ENCODE measurements at regions of chr1 and their contacts with region 1.

Region 1: GRCh38 chr1:214328770-214329469 is 48.0 kb downstream of the SMYD2 start:
- DNase-seq: peak; percentile 89
- H3K4me3 ChIP-seq: no peak overlapping the region
- H3K27ac ChIP-seq: no peak overlapping the region
- H3K4me1 ChIP-seq: peaks cover 0 to 7% (median 5%) of the 10 kb centered on the region in 4 donors
- H3K27me3 ChIP-seq: no peaks in the 10 kb centered on the region
- CTCF ChIP-seq: peak; percentile 79 to 92 (median 86)
- EP300 ChIP-seq: no peak
- POLR2A ChIP-seq: no peak

Region 2: GRCh38 chr1:213457097-213457680 is 871.7 kb before region 1 on chr1:
- intact Hi-C with region 1: no loop called
- DNase-seq: no peak
- H3K4me3 ChIP-seq: no peak overlapping the region
- H3K27ac ChIP-seq: peak overlapping the region in 2 of 4 donors; percentile 44 to 50
- H3K4me1 ChIP-seq: peaks cover 0 to 17% (median 13%) of the 10 kb centered on the region in 4 donors
- H3K27me3 ChIP-seq: no peaks in the 10 kb centered on the region
- CTCF ChIP-seq: no peak
- EP300 ChIP-seq: no peak
- POLR2A ChIP-seq: no peak

Region 3: GRCh38 chr1:214215583-214215982 is 113.3 kb before region 1 on chr1:
- intact Hi-C with region 1: loop called (anchors 2 kb)
- DNase-seq: no peak
- H3K4me3 ChIP-seq: no peak overlapping the region
- H3K27ac ChIP-seq: no peak overlapping the region
- H3K4me1 ChIP-seq: peaks cover 0 to 6% (median 5%) of the 10 kb centered on the region in 4 donors
- H3K27me3 ChIP-seq: no peaks in the 10 kb centered on the region
- CTCF ChIP-seq: no peak
- EP300 ChIP-seq: no peak
- POLR2A ChIP-seq: no peak

Region 4: GRCh38 chr1:214261206-214262123 is 67.5 kb before region 1 on chr1:
- intact Hi-C with region 1: loop called (anchors 1 kb)
- DNase-seq: peak; percentile 88
- H3K4me3 ChIP-seq: no peak overlapping the region
- H3K27ac ChIP-seq: no peak overlapping the region
- H3K4me1 ChIP-seq: peaks cover 0 to 6% (median 0%) of the 10 kb centered on the region in 4 donors
- H3K27me3 ChIP-seq: peaks cover 0 to 44% (median 5%) of the 10 kb centered on the region in 3 donors
- CTCF ChIP-seq: peak; percentile 76 to 95 (median 84)
- EP300 ChIP-seq: no peak
- POLR2A ChIP-seq: no peak

Region 5: DNA sequence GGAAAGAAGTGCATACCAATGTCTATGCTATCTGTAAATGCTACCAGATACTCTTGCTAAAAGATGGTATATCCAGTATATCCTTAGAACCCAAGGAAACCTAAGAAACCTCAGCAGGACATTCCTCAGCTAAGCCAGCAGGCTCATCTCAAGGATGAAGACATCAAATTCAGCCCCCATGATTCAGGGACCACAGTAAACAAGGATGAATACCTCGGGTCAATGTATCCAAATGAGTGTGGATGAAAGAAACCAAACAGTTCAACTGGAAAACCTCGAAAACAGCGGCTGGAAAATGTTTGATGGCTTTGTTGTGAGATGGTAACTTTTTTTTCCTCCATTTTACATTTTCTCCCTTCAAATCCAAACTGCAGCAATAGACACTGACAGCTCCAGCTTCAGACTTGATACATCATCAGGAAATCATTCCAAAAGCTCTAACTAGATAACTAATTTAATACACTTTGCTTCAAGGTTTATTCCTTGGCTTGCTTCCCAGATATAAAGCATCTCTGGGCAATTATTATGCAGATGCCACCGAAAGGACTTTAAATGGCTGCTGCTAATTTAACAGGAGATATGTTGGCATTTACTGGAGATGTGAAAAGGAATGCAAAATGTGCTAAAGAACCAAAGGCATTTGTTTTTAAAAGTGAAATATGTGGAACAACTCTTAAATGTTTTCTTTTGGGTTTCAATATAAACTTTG is 25.7 kb after region 1 on chr1:
- intact Hi-C with region 1: no loop called
- DNase-seq: no peak
- H3K4me3 ChIP-seq: no peak overlapping the region
- H3K27ac ChIP-seq: peak overlapping the region in 1 of 4 donors; percentile 52
- H3K4me1 ChIP-seq: peaks cover 2 to 38% (median 11%) of the 10 kb centered on the region in 4 donors
- H3K27me3 ChIP-seq: no peaks in the 10 kb centered on the region
- CTCF ChIP-seq: no peak
- EP300 ChIP-seq: no peak
- POLR2A ChIP-seq: no peak

Region 6: DNA sequence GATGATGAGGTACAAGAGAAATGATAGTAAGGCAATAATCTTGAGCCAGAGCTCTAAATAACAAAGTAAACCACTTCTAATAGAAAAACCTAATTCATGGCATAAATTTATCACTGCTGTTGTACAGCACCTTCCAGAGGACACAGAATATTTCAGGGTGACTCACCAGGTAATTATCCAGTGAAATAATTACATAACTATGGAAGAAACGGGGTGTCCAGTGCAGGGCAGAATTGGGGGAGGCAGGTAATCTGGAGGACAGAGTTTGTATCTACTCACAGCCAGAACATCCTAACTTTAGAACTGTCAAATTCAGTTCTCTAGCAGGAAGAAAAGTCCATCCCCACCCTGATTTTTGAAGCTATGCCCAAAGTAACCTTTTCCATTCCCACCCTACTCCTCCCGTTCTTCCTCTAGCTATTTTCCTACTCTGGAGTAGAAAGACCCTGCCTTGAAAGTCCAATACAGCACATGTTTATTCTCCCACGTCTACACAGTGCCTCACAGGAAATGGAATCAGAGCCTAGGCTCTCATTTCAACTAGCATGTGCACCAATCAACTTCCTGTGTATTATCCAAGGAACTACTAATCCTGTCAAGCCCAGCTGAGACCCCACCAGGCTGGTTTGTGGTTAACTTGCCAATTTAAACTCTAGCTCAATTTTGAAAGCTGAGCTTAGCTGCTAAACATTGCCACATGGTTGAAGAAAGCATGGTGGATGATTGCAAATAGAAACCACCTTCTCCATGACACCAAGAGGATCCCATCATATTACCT is 125.9 kb after region 1 on chr1:
- intact Hi-C with region 1: no loop called
- DNase-seq: no peak
- H3K4me3 ChIP-seq: no peak overlapping the region
- H3K27ac ChIP-seq: peak overlapping the region in 1 of 4 donors; percentile 30
- H3K4me1 ChIP-seq: peaks cover 0 to 51% (median 32%) of the 10 kb centered on the region in 4 donors
- H3K27me3 ChIP-seq: no peaks in the 10 kb centered on the region
- CTCF ChIP-seq: no peak
- EP300 ChIP-seq: no peak
- POLR2A ChIP-seq: no peak

Region 7: GRCh38 chr1:214494706-214495105 is 165.8 kb after region 1 on chr1:
- intact Hi-C with region 1: no loop called
- DNase-seq: no peak
- H3K4me3 ChIP-seq: no peak overlapping the region
- H3K27ac ChIP-seq: peak overlapping the region in 3 of 4 donors; percentile 10 to 84 (median 69)
- H3K4me1 ChIP-seq: peaks cover 0 to 63% (median 31%) of the 10 kb centered on the region in 4 donors
- H3K27me3 ChIP-seq: no peaks in the 10 kb centered on the region
- CTCF ChIP-seq: no peak
- EP300 ChIP-seq: no peak
- POLR2A ChIP-seq: no peak

Region 8: DNA sequence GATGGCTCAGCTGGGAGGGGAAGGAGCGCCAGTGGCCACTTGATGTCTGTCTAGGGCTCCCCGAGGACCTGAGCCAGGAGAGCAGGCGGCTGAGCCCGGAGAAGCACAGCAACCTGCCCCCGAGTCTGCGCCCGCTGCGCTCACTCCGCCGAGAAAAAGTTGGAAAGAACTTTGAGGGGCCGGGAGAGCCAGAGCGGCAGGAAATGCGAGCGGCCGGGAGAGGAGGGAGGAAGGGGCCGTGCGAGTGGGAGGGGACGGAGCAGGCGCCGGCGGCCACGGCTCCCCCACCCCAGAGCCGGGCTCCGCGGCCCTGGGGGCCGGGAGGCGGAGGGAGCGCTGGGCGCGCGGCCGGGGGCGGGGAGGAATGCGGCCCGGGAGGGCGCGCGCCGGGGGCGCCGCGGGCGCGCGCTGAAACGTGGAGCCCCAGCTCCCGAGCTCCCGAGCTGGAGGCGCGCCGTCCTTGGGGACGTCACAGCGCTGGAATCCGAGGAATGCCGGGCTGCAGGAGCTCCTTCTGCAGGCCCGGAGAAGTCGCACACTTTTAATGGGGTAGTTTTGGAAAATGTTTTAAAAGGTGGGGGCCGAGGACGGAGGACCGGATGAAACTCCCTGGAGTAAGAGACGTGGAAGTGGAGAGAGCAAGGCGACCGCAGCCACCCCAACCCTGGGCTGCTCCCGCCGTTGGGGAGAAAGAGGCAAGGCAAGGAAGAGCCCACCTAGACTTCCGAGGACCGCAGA is 222.7 kb after region 1 on chr1 and contains the start of gene PTPN14:
- intact Hi-C with region 1: loop called (anchors 10 kb)
- DNase-seq: peak; percentile 95
- H3K4me3 ChIP-seq: peak within 1 kb of the TSS; percentile 67 to 92 (median 88)
- H3K27ac ChIP-seq: peak within 1 kb of the TSS; percentile 87 to 99 (median 98)
- H3K4me1 ChIP-seq: peaks cover 0 to 45% (median 36%) of the 10 kb centered on the region in 4 donors
- H3K27me3 ChIP-seq: no peaks in the 10 kb centered on the region
- CTCF ChIP-seq: peak in 2 of 4 experiments; percentile 16 to 17
- EP300 ChIP-seq: peak in 1 of 4 donors; percentile 23
- POLR2A ChIP-seq: peak; percentile 38 to 71
- total RNA-seq, gene PTPN14: 20.1 to 35.5 (median 33.1) TPM

Region 9: DNA sequence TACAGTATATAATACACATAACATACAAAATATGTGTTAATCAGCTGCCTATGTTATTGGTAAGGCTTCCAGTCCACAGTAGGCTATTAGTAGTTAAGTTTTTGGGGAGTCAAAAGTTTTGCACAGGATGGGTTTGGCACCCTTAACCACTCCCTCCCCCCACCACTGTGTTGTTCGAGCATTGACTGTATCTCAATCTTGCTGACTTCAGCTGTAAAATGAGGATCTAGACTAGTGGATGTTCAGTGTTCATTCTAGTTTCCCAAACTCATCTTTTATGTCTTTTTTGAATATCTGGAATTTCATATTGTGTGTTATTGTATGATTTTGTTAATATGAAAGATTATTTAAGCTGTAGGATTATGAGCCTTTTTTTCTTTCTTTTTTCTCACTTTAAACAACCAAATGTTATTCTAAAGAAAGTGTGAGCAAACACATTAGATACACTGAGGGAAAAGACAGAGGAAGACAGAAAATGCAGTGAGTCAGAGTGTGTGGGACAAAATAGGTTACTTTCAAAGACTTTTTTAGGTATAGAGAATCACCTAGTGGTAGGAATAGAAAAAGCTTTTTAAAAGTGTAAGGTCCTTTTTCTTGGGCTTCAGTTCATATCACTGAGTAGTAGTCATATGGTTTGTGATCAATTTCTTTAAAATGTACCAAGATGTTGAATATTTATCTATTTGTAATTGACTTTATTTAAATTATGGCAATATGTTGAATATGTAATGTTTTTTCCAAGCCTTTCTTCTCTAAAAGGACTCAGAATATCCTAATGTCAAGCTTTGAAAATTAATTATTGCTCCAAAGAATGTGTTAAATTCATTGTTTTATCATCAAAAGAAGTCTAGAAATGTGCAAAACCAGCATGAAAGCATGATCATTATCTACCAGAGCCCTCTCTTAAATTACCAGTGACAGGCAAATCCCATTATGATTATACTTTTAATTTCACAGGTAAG is 256.2 kb after region 1 on chr1:
- intact Hi-C with region 1: loop called (anchors 1 kb)
- DNase-seq: no peak
- H3K4me3 ChIP-seq: no peak overlapping the region
- H3K27ac ChIP-seq: peak overlapping the region in 2 of 4 donors; percentile 55 to 64
- H3K4me1 ChIP-seq: peaks cover 0 to 30% (median 14%) of the 10 kb centered on the region in 4 donors
- H3K27me3 ChIP-seq: no peaks in the 10 kb centered on the region
- CTCF ChIP-seq: peak; percentile 46 to 81 (median 76)
- EP300 ChIP-seq: no peak
- POLR2A ChIP-seq: no peak

Region 10: GRCh38 chr1:215526553-215527151 is 1197.7 kb after region 1 on chr1:
- intact Hi-C with region 1: loop called (anchors 10 kb)
- DNase-seq: no peak
- H3K4me3 ChIP-seq: no peak overlapping the region
- H3K27ac ChIP-seq: no peak overlapping the region
- H3K4me1 ChIP-seq: no peaks in the 10 kb centered on the region
- H3K27me3 ChIP-seq: no peaks in the 10 kb centered on the region
- CTCF ChIP-seq: peak; percentile 26 to 66 (median 55)
- EP300 ChIP-seq: no peak
- POLR2A ChIP-seq: no peak